Lower leg skin (tissue), 4 donors: ENCODE measurements at regions of chr18 and their contacts with region 1.

Region 1: GRCh38 chr18:59402432-59403090 is 43.5 kb upstream of the LMAN1 start:
- DNase-seq: peak; percentile 40 to 90
- H3K4me3 ChIP-seq: no peak overlapping the region
- CTCF ChIP-seq: peak in 1 of 3 donors; percentile 49
- POLR2A ChIP-seq: no peak

Region 2: GRCh38 chr18:59308248-59308937 is 94.2 kb before region 1 on chr18:
- intact Hi-C with region 1: loop called (anchors 2 kb)
- DNase-seq: peak; percentile 35 to 92
- H3K4me3 ChIP-seq: no peak overlapping the region
- CTCF ChIP-seq: peak in 1 of 3 donors; percentile 44
- POLR2A ChIP-seq: no peak

Region 3: GRCh38 chr18:59374128-59374527 is 28.4 kb before region 1 on chr18:
- intact Hi-C with region 1: no loop called
- DNase-seq: no peak
- H3K4me3 ChIP-seq: no peak overlapping the region
- CTCF ChIP-seq: no peak
- POLR2A ChIP-seq: no peak

Region 4: GRCh38 chr18:59672235-59672711 is 269.7 kb after region 1 on chr18:
- intact Hi-C with region 1: no loop called
- DNase-seq: peak in 1 of 2 donors; percentile 35
- H3K4me3 ChIP-seq: no peak overlapping the region
- CTCF ChIP-seq: no peak
- POLR2A ChIP-seq: no peak